Esophagus squamous epithelium (tissue), 5 donors: ENCODE measurements at regions of chr19 and their contacts with region 1.

Region 1: GRCh38 chr19:48588670-48589399 is 17.7 kb upstream of the SPACA4 start:
- DNase-seq: no peak
- H3K4me3 ChIP-seq: peak overlapping the region in 3 of 4 donors; percentile 31 to 70 (median 35)
- H3K27ac ChIP-seq: peak overlapping the region; percentile 53 to 74 (median 68)
- H3K4me1 ChIP-seq: peaks cover 4 to 31% (median 16%) of the 10 kb centered on the region in 3 donors
- H3K27me3 ChIP-seq: no peaks in the 10 kb centered on the region
- CTCF ChIP-seq: peak; percentile 76 to 97 (median 94)
- POLR2A ChIP-seq: no peak

Region 2: DNA sequence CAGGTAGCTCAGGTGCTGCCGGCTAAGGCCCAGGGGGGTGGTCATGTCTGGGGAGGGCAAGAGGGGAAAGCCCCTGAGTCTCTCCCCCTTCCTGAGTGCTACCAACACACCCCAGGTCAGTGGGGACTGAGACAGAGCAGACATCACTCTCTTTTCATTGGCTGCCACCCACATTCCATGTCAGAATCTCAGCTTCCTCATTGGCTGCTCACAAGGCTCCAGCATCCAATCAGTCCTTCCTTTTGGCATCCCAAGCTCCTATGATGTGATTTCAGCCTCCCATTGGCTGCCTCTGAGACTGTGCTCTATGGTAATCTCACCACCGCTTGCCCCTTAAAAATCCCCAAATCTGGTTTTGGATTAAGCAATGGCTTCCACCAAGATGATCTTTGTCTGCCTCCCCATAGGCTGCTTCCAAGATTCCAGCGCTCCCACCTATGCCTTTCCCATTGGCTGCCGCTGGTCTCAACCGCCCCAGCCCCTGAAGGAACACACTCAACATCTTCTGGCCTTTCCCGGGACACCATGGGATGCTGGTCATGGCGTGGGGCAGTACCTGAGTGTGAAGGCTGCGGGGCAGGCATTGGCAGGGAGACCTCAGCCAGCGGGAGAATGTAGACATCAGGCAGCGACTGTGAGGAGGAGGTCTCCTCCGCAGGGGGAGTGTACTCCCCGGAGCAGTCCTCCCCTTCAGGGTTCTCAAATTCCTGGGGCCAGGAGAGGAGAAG is 79.2 kb before region 1 on chr19:
- intact Hi-C with region 1: loop called (anchors 2 kb)
- DNase-seq: no peak
- H3K4me3 ChIP-seq: no peak overlapping the region
- H3K27ac ChIP-seq: no peak overlapping the region
- H3K4me1 ChIP-seq: peaks cover 14 to 36% (median 17%) of the 10 kb centered on the region in 3 donors
- H3K27me3 ChIP-seq: peaks cover 5 to 52% (median 11%) of the 10 kb centered on the region in 4 donors
- CTCF ChIP-seq: no peak
- POLR2A ChIP-seq: no peak